Dendritic cell treated with granulocyte-macrophage colony-stimulating factor and Interleukin-4, amounts not matched to agents 40 ng/mL and 50 ng/mL, for 4 days (primary cell): ENCODE measurements at regions of chr10 and their contacts with region 1.

Region 1: GRCh38 chr10:29443745-29444523 is 155.1 kb downstream of the LYZL1 start:
- H3K4me3 Mint-ChIP-seq: no peak overlapping the region
- H3K27ac Mint-ChIP-seq: no peak overlapping the region
- H3K4me1 Mint-ChIP-seq: peaks cover 25% of the 10 kb centered on the region
- H3K27me3 Mint-ChIP-seq: no peaks in the 10 kb centered on the region

Region 2: GRCh38 chr10:29039677-29040189 is 404.2 kb before region 1 on chr10:
- intact Hi-C with region 1: no loop called
- H3K4me3 Mint-ChIP-seq: no peak overlapping the region
- H3K27ac Mint-ChIP-seq: no peak overlapping the region
- H3K4me1 Mint-ChIP-seq: peaks cover 5% of the 10 kb centered on the region
- H3K27me3 Mint-ChIP-seq: peaks cover 2% of the 10 kb centered on the region

Region 3: DNA sequence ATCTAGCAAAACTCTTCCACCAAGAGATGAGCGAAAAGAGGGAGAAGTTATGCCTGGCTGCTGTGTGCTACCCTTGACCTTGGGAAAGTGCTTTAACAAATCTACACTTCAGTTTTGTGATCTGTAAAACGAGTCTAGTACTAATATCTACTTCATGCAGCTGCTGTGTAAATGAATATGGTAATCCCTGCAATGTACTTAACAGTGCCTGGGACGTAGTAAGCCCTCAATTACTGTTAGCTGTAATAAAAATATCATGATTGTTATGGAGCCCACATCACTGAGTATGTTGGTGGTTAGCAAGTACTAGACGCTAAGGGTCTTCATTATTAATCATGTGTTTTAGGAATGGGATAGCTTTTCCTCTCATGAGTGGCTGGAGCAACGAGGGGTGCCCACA is 74.5 kb before region 1 on chr10:
- intact Hi-C with region 1: no loop called
- H3K4me3 Mint-ChIP-seq: no peak overlapping the region
- H3K27ac Mint-ChIP-seq: no peak overlapping the region
- H3K4me1 Mint-ChIP-seq: no peaks in the 10 kb centered on the region
- H3K27me3 Mint-ChIP-seq: peaks cover 14% of the 10 kb centered on the region

Region 4: DNA sequence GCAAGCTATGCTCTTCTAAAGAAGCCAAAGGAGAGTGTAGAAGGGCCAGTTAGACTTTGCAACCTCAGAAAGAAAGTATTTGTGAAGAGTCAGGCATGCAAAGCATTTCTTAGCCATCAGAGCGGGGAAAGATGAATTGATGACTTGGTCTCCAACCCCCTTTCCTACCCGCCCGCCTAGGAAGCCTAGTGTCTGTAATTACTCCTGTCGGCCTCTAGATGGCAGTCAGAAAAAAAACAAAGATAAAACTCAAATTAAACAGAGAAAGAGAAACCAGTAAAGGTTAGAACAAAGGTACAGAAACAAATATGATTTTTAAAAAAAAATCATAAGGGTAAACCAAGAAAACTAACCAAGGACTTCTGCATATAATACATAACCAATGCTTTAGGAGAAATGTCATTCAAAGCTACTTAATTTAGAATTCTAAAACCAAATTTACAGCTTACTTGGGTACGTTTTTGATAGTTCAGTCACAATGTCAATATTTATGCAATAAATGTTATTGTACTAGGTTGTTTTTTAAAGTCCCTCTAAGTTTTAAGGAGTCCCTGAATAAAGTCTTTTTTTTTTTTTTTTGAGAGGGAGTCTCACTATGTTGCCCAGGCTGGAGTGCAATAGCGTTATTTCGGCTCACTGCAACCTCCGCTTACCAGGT is 57.5 kb before region 1 on chr10:
- intact Hi-C with region 1: loop called (anchors 1 kb)
- H3K4me3 Mint-ChIP-seq: no peak overlapping the region
- H3K27ac Mint-ChIP-seq: no peak overlapping the region
- H3K4me1 Mint-ChIP-seq: no peaks in the 10 kb centered on the region
- H3K27me3 Mint-ChIP-seq: peaks cover 2% of the 10 kb centered on the region

Region 5: GRCh38 chr10:29501692-29502091 is 57.8 kb after region 1 on chr10:
- intact Hi-C with region 1: no loop called
- H3K4me3 Mint-ChIP-seq: no peak overlapping the region
- H3K27ac Mint-ChIP-seq: no peak overlapping the region
- H3K4me1 Mint-ChIP-seq: peaks cover 5% of the 10 kb centered on the region
- H3K27me3 Mint-ChIP-seq: no peaks in the 10 kb centered on the region